HEK293 (cell line): ENCODE measurements at regions of chr14 and their contacts with region 1.

Region 1: GRCh38 chr14:80850197-80850814 is 91.2 kb downstream of the CEP128 start:
- H3K4me3 ChIP-seq: no peak overlapping the region
- H3K27ac ChIP-seq: no peak overlapping the region
- H3K4me1 ChIP-seq: no peaks in the 10 kb centered on the region
- CTCF ChIP-seq: no peak

Region 2: GRCh38 chr14:80213599-80213998 is 636.7 kb before region 1 on chr14:
- CTCF ChIA-PET with region 1: interaction called, 16 read pairs
- POLR2A ChIA-PET with region 1: no interaction called
- H3K4me3 ChIP-seq: no peak overlapping the region
- H3K27ac ChIP-seq: no peak overlapping the region
- H3K4me1 ChIP-seq: no peaks in the 10 kb centered on the region
- CTCF ChIP-seq: no peak

Region 3: DNA sequence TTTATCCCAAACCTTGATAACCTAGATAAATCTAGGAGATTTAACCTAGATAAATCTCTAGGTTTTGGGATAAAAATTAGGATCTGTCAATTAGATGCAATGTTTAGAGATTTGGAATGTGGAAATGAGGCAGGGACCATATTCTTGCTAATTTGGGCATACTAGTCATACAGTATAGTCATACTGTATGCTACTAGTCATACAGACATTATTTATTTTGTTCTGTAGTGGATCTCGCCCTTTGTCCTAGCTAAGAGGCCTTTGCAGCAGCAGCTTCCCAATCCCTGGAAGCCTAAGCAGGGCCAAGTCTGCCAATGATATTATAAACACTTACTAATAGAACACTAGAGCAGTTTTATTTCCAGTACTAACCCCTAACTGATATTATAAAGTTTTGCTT is 45.2 kb before region 1 on chr14:
- CTCF ChIA-PET with region 1: no interaction called
- POLR2A ChIA-PET with region 1: no interaction called
- H3K4me3 ChIP-seq: no peak overlapping the region
- H3K27ac ChIP-seq: no peak overlapping the region
- H3K4me1 ChIP-seq: no peaks in the 10 kb centered on the region
- CTCF ChIP-seq: no peak

Region 4: DNA sequence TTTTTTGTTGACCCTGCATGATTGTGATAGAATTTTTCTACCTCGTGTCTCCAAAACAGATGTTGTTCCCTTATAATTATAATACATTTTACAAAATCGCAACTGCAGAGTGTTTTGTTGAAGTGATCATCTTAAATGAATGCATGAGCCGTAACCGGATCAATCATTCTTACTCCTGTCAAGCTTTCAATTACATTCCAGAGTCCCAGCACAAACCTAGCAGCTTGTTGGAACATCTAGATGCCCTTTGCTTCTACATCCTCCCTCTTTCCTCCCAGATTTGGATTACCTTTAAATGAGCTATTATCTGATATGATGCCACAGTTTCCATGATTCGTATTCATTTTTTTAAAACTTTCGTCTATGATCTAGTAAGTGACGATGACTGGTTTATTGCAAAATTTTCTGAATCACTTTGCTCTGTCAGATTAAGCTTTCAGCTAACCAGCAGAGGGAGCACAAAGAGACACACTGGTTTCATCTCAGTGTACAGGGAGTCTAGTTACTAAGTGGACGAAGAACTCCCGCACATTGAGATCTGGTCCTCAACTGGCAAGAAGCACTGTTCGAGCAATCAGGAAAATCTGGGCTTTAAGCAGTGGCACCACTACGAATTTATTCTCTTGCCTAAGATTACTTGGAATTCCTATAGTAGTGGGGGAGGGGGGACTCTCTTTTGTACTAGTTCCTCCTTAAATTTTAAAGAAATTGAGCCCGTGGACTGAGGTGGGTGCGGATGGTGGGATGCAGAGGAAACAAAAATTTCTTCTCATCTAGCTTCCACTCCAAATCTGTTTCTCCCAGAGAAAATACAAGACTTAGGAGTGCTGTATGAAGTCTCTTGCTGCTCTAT is 146.0 kb after region 1 on chr14:
- CTCF ChIA-PET with region 1: no interaction called
- POLR2A ChIA-PET with region 1: no interaction called
- H3K4me3 ChIP-seq: no peak overlapping the region
- H3K27ac ChIP-seq: no peak overlapping the region
- H3K4me1 ChIP-seq: no peaks in the 10 kb centered on the region
- CTCF ChIP-seq: peak; percentile 12; the same call in 1 of the 2 replicates